ENCODE measurements at regions of chr5 and their contacts with region 1.

Region 1: DNA sequence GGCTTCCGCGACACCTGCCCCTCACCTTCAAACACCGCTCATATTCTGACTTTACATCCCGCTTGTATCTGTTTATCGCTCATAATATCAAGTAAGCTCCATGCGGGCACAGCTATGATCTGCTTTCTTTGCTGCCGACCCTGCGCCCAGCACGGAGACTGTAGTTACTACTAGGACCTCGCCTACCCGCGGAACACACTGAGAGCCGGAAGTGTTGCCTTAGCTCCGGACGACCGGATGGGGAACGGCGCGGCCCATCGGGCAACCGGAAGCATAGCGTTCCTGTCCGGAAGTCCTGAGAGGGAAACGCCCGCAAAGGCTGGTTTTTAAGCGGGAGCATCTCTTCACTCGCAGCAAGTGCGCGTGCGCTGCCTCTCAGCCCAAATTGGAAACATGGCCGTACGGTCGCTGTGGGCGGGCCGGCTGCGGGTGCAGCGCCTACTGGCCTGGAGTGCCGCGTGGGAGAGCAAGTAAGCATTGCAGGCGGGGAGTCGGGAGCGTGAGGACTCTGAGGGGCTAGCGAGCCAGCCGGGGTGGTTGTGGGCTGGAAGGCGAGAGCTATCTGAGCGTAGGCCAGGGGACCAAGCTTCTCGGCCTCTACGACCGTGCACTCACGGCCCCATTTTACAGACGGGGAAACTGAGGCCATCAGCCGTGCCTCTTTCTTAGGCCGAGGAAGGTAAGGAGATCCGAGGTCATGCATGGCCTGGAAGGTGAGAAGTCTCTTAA is at the start of gene GRPEL2:
- DNase-seq: peak; percentile 97
- H3K4me3 Mint-ChIP-seq: peak within 1 kb of the TSS; percentile 91
- H3K27ac Mint-ChIP-seq: peak within 1 kb of the TSS; percentile 95
- H3K4me1 Mint-ChIP-seq: peaks cover 52% of the 10 kb centered on the region
- H3K27me3 Mint-ChIP-seq: no peaks in the 10 kb centered on the region
- total RNA-seq, gene GRPEL2: 44.7 to 49.6 TPM

Region 2: GRCh38 chr5:149063017-149063687 is 282.2 kb before region 1 on chr5 and contains the start of gene SH3TC2:
- CTCF ChIA-PET with region 1: no interaction called
- intact Hi-C with region 1: no loop called
- DNase-seq: no peak
- H3K4me3 Mint-ChIP-seq: no peak within 1 kb of the TSS
- H3K27ac Mint-ChIP-seq: no peak within 1 kb of the TSS
- H3K4me1 Mint-ChIP-seq: no peaks in the 10 kb centered on the region
- H3K27me3 Mint-ChIP-seq: peaks cover 8% of the 10 kb centered on the region
- total RNA-seq, gene SH3TC2: not detected

Region 3: GRCh38 chr5:149240354-149240998 is 104.8 kb before region 1 on chr5:
- CTCF ChIA-PET with region 1: no interaction called
- intact Hi-C with region 1: loop called (anchors 1 kb)
- DNase-seq: peak; percentile 95
- H3K4me3 Mint-ChIP-seq: peak overlapping the region; percentile 19
- H3K27ac Mint-ChIP-seq: peak overlapping the region; percentile 80
- H3K4me1 Mint-ChIP-seq: peaks cover 33% of the 10 kb centered on the region
- H3K27me3 Mint-ChIP-seq: no peaks in the 10 kb centered on the region

Region 4: DNA sequence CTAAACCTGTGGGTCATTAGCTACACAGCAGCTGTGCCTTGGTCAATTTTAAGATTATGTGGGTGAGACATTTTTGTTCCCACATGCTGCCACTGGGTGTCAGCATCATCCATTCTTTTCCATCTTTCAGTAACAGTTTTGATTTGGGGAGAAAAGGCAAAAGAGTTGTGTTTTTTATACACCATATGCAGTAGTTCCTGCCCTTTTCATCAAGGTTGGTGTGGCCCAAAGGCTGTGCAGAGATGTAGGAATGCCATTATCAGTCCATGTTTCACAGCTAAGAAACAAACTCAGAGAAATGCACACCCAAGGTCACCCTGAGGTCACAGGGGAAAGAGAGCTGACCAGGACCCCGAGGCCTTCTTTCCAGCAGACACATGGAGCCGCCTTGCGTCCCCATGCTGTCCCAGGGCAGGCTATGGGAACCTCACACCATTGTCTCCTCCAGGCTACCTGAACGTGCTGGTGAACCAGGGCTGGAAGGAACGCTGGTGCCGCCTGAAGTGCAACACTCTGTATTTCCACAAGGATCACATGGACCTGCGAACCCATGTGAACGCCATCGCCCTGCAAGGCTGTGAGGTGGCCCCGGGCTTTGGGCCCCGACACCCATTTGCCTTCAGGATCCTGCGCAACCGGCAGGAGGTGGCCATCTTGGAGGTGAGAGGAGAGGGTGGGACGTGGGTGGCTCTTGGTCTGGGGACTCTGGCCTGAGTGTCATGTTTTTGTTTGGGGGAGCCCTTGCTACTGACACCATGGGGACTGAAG is 27.8 kb before region 1 on chr5:
- CTCF ChIA-PET with region 1: interaction called, 5 read pairs
- intact Hi-C with region 1: loop called (anchors 2 kb)
- DNase-seq: peak; percentile 58
- H3K4me3 Mint-ChIP-seq: no peak overlapping the region
- H3K27ac Mint-ChIP-seq: no peak overlapping the region
- H3K4me1 Mint-ChIP-seq: no peaks in the 10 kb centered on the region
- H3K27me3 Mint-ChIP-seq: no peaks in the 10 kb centered on the region

Region 5: GRCh38 chr5:149357370-149358293 is 12.3 kb after region 1 on chr5 and contains the start of gene PCYOX1L:
- CTCF ChIA-PET with region 1: interaction called, 12 read pairs
- intact Hi-C with region 1: loop called (anchors 1 kb)
- DNase-seq: peak; percentile 95
- H3K4me3 Mint-ChIP-seq: peak within 1 kb of the TSS; percentile 95
- H3K27ac Mint-ChIP-seq: peak within 1 kb of the TSS; percentile 90
- H3K4me1 Mint-ChIP-seq: peaks cover 61% of the 10 kb centered on the region
- H3K27me3 Mint-ChIP-seq: no peaks in the 10 kb centered on the region
- total RNA-seq, gene PCYOX1L: 19.9 to 21.0 TPM

Region 6: DNA sequence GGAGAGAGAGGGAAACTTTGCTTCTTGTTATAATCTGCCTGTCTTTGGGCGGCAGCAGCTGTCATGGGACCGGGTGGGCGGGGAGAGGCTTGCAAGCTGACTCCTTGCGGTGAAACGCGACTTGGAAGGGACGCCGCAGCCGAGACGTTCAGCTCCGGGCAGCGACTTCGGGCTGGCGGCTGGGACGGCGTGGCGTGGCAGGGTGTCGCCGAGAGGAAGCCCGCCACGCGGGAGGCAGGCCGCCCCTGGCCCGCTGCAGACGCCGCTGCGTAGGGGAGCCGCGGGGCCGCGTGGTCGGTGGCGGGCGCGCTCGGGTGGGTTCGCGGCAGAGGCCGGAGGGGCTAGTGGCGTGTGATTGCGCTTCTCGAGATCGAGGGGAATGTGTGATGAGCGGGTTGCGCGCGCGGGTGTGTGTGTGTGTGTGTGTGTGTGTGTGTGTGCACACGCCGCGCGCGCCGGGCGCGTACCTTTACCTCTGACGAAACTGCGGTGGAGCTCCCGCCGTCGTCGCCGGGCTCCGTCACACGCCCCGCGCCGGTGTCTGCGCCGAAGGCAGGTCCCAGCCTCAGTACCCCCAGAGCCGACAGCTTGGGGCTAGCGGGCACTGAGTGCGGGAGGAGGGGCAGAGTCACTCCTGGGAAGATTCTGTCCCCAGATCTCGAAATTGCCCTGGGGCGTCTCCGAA is 386.5 kb after region 1 on chr5:
- CTCF ChIA-PET with region 1: no interaction called
- intact Hi-C with region 1: loop called (anchors 2 kb)
- DNase-seq: peak; percentile 90
- H3K4me3 Mint-ChIP-seq: peak overlapping the region; percentile 81
- H3K27ac Mint-ChIP-seq: peak overlapping the region; percentile 56
- H3K4me1 Mint-ChIP-seq: peaks cover 4% of the 10 kb centered on the region
- H3K27me3 Mint-ChIP-seq: no peaks in the 10 kb centered on the region